Activated T-helper 1 cell treated with anti-CD3 and anti-CD28 coated beads, Interleukin-12 subunit alpha, Interleukin-12 subunit beta, Interleukin-2, Interleukin-4 antibody, amounts not matched to agents 30 ng/mL and 10 ng/mL and 1 ng/mL, durations not matched to agents 14 hours and 24 hours and 36 hours (primary cell): ENCODE measurements at regions of chr2 and their contacts with region 1.

Region 1: DNA sequence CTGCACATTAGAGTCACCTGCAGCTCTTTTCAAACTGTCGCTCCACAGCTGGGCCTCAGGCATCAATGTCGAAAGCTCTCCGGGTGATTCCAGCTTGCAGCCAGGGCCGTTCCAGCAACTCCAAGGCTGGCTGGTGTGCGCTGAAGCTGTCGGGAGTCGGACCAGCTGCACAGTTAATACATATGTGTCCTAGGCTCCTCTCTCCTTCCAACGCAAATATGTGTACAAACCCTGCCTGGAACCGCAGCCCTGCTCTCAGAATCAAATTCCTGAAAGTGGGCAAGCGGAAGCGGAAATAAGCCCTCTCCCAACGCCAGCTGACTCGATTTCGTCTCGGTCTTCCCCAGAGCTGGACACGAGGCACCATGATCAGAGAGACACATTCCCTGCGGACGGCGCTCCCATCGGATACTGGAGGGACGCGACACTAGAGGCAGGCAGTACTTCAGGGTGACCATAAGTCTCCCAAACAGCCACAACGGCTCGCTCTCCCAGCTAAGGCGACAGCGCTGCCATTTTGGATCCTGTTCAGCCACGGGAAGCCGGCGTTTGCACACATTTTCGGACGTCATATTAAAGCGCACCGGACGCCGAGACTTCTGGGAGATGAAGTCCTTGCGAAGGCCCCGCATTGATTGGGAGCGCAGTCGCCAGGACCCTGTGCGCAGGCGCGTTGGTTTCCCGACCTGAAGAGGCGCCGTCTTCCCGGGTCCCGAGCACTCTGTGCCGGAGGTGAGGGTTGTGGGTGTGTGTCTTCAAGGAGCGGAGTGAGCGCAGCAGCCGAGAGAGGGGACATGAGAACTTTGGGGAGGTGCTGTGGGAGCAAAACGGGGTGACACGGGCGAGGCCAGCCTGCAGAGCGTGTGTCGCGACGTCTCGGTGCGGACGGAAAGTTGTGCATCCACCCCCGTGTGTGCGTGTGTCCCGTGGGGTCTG is at the start of gene ZNF2:
- DNase-seq: peak; percentile 96
- H3K4me3 Mint-ChIP-seq: peak within 1 kb of the TSS; percentile 99
- H3K27ac Mint-ChIP-seq: peak within 1 kb of the TSS; percentile 92
- H3K4me1 Mint-ChIP-seq: peaks cover 42% of the 10 kb centered on the region
- H3K27me3 Mint-ChIP-seq: no peaks in the 10 kb centered on the region
- total RNA-seq, gene ZNF2: 3.8 and 3.9 TPM in 2 replicates

Region 2: DNA sequence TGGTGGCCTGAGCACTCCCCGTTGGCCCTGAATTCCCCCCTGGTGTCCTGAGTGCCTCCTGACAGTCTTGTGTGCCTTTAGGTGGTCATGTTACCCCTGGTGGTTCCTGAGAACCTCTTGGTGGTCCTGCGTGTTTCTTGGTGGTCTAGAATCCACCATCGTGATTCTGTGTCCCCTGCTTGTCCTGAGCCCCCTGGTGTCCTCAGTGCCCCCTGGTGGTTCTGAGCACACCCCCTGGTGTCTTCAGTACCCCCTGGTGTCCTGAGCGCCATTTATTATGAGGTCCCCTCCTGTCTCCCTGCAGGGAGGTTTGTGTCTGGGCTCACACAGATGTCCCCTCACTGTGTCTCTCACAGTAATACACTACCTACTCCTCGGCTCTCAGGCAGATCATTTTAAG is 201.2 kb before region 1 on chr2:
- intact Hi-C with region 1: no loop called
- DNase-seq: no peak
- H3K4me3 Mint-ChIP-seq: no peak overlapping the region
- H3K27ac Mint-ChIP-seq: no peak overlapping the region
- H3K4me1 Mint-ChIP-seq: no peaks in the 10 kb centered on the region
- H3K27me3 Mint-ChIP-seq: peaks cover 14% of the 10 kb centered on the region

Region 3: GRCh38 chr2:95126791-95127190 is 38.6 kb before region 1 on chr2:
- intact Hi-C with region 1: loop called (anchors 1 kb)
- DNase-seq: no peak
- H3K4me3 Mint-ChIP-seq: no peak overlapping the region
- H3K27ac Mint-ChIP-seq: no peak overlapping the region
- H3K4me1 Mint-ChIP-seq: peaks cover 8% of the 10 kb centered on the region
- H3K27me3 Mint-ChIP-seq: peaks cover 2% of the 10 kb centered on the region

Region 4: GRCh38 chr2:95207111-95207961 is 41.9 kb after region 1 on chr2 and contains the start of gene ZNF892:
- intact Hi-C with region 1: loop called (anchors 1 kb)
- DNase-seq: peak; percentile 74
- H3K4me3 Mint-ChIP-seq: peak within 1 kb of the TSS; percentile 90
- H3K27ac Mint-ChIP-seq: peak within 1 kb of the TSS; percentile 54
- H3K4me1 Mint-ChIP-seq: peaks cover 30% of the 10 kb centered on the region
- H3K27me3 Mint-ChIP-seq: no peaks in the 10 kb centered on the region
- total RNA-seq, gene ZNF892: 4.7 and 5.9 TPM in 2 replicates

Region 5: GRCh38 chr2:96274355-96275056 is 1109.1 kb after region 1 on chr2:
- intact Hi-C with region 1: no loop called
- DNase-seq: no peak
- H3K4me3 Mint-ChIP-seq: no peak overlapping the region
- H3K27ac Mint-ChIP-seq: peak overlapping the region; percentile 61
- H3K4me1 Mint-ChIP-seq: no peaks in the 10 kb centered on the region
- H3K27me3 Mint-ChIP-seq: no peaks in the 10 kb centered on the region